OCI-LY7 (cell line): ENCODE measurements at regions of chrX and their contacts with region 1.

Region 1: GRCh38 chrX:31658360-31658759 is 586.5 kb upstream of the FTHL17 start:
- DNase-seq: peak; percentile 31
- H3K4me3 ChIP-seq: no peak overlapping the region
- H3K27ac ChIP-seq: no peak overlapping the region
- H3K4me1 ChIP-seq: no peaks in the 10 kb centered on the region
- CTCF ChIP-seq: peak; percentile 81

Region 2: DNA sequence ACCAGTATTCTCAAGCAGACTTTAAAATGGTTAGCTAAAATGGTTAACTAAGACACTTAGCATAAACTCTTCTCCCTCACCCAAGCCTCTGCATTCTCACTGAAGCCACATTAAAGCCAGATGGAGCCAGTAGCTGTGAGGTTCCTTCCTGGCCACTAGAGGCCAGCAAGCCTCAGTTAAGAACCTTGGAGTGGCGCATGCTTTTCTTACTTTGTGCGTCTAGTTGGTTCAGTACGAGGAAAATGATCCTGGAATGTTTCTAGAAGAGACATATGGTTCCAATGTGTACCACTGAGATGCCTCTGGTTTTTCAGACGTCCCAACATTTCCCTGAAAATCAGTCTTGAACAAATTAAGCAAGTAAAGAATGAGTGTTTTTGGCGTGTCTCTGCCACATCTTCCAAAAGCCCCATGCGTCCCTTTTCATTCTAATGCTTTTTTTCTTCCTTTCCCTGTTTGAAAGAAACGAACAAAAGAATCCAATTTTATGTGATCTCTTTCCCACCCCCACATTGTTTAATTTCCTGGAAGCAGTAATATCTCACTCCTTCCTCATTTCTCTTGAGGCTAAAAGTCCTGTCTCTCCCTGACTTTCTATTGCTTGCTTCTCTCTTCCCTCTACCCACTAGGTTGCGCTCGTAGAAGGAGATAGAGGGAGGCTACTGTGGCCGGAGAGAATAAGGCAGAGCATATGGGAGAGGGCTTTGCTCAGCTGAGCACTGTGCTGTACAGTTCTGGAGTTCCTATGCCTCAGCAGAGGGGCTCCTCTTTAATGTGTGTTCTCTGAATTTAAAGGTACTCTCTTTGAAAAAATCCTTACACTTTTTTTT is 686.4 kb before region 1 on chrX:
- CTCF ChIA-PET with region 1: no interaction called
- POLR2A ChIA-PET with region 1: no interaction called
- intact Hi-C with region 1: loop called (anchors 2 kb)
- DNase-seq: peak; percentile 54
- H3K4me3 ChIP-seq: peak overlapping the region; percentile 43
- H3K27ac ChIP-seq: no peak overlapping the region
- H3K4me1 ChIP-seq: no peaks in the 10 kb centered on the region
- CTCF ChIP-seq: peak; percentile 79

Region 3: GRCh38 chrX:32798990-32799389 is 1140.6 kb after region 1 on chrX:
- CTCF ChIA-PET with region 1: no interaction called
- POLR2A ChIA-PET with region 1: no interaction called
- intact Hi-C with region 1: no loop called
- DNase-seq: no peak
- H3K4me3 ChIP-seq: no peak overlapping the region
- H3K27ac ChIP-seq: no peak overlapping the region
- H3K4me1 ChIP-seq: no peaks in the 10 kb centered on the region
- CTCF ChIP-seq: no peak